Activated T-helper 2 cell treated with anti-CD3 and anti-CD28 coated beads, Interferon-gamma antibody, Interleukin-2, Interleukin-4, amounts not matched to agents 10 μg/mL and 5 μg/mL and 100 μg/mL, durations not matched to agents 14 hours and 24 hours and 36 hours (primary cell): ENCODE measurements at regions of chr16 and their contacts with region 1.

Region 1: GRCh38 chr16:82229796-82230619 is 60.0 kb upstream of the MPHOSPH6 start:
- DNase-seq: peak; percentile 27
- H3K4me3 Mint-ChIP-seq: no peak overlapping the region
- H3K27ac Mint-ChIP-seq: no peak overlapping the region
- H3K4me1 Mint-ChIP-seq: no peaks in the 10 kb centered on the region
- H3K27me3 Mint-ChIP-seq: peaks cover 26% of the 10 kb centered on the region

Region 2: DNA sequence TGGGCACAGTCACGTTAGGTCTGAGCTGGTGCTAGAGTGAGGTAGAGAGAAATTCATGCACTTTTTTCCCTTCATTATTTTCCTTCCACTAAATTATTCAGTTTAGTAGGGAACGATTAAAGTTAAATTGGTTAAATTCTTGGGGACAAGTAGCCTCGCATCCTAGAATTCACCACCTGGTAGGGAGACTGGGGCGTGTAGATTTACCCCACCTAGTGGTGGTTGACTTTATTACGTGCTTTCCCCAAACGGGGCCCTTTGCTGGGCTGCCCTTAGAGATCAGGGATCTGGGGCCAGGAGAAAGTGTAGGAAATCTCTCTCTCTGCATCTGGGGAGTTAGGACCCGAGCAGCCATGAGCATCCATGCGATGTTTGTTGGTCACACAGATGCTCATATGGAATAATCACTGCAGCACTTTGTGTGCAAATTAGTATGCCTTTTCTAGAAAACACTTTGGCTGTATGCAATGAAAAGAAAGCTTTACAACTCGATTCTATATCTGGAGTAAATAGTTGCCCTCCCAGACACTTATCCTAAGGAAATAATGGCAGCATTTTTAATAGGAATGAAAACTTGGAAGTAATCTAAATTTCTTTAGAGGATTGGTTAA is 343.9 kb before region 1 on chr16:
- intact Hi-C with region 1: loop called (anchors 1 kb)
- DNase-seq: no peak
- H3K4me3 Mint-ChIP-seq: no peak overlapping the region
- H3K27ac Mint-ChIP-seq: no peak overlapping the region
- H3K4me1 Mint-ChIP-seq: peaks cover 1% of the 10 kb centered on the region
- H3K27me3 Mint-ChIP-seq: no peaks in the 10 kb centered on the region

Region 3: GRCh38 chr16:81940781-81941560 is 289.0 kb before region 1 on chr16:
- intact Hi-C with region 1: loop called (anchors 1 kb)
- DNase-seq: no peak
- H3K4me3 Mint-ChIP-seq: no peak overlapping the region
- H3K27ac Mint-ChIP-seq: no peak overlapping the region
- H3K4me1 Mint-ChIP-seq: no peaks in the 10 kb centered on the region
- H3K27me3 Mint-ChIP-seq: no peaks in the 10 kb centered on the region

Region 4: DNA sequence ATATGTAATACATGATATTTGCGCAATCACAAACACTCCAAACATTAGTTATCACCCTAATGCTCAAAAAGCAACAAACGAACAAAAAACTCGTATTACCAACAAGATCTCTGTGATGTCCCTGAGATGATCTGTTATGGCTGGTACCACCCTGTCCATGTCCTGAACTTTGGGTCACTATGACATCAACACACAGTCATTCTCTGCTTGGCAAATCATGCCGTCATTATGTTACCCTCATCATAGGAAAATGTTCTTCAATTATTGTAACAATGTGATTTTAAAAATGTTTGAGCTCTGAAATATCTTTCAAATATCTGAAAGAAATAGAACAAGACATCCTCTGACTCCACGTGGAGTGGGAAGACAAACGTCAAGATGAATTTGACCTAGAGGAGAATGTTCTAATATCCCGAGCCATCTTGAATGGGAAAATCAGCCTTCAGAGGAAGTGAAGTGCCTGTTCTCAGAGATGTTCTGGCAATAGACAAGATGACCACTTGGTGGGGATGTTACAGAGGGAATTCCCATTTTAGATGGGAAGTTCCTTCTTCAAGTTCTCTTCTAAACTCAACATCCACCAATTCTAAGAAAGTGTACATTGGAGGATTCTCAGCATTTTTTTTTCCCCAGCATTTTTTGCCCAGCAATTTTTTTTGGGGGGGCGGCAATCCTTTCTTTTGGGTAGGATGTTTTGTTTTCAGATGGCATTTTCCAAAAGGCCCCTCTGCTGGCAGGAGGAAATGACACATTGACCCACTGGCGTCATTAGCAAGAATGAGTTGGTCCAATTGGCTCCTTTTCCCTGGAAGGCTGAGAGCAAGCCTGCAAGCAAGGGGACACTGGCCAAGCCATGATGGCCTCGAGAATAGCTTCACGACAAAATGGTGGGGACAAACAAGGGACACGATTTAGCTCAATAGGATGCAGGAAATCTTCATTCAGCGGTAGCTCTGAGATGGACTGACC is 198.6 kb before region 1 on chr16:
- intact Hi-C with region 1: loop called (anchors 5 kb)
- DNase-seq: no peak
- H3K4me3 Mint-ChIP-seq: no peak overlapping the region
- H3K27ac Mint-ChIP-seq: no peak overlapping the region
- H3K4me1 Mint-ChIP-seq: no peaks in the 10 kb centered on the region
- H3K27me3 Mint-ChIP-seq: peaks cover 13% of the 10 kb centered on the region

Region 5: DNA sequence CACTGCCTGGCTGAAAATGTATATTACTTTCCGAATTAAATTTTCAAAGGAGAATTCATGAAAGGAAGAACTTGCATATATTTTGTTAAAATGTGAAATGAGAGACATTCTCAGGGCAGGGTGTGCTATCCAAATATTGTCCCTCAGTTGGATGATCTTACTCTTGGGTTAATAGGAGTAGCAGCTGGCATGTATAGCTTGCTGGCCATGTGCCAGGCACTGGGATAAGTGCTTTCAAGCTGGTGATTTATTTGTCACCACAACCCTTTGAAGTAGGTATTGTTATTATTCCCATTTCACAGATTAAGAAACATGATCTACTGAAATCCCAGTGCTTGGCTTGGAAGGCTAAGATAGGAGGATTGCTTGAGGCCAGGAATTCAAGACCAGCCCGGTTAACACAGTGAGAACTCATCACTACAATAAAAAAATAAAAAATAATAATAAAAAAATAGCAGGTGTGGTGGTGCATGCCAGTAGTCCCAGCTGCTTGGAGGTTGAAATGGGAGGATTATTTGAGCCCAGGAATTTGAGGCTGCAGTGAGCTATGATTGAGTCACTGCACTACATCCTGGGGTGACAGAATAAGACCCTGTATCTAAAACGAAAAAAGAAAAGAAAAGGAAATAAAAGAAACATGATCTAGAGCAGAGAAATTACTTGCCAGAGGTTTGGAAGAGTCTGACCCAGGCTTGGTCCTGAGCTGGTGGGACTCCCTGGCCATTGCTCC is 48.4 kb before region 1 on chr16:
- intact Hi-C with region 1: no loop called
- DNase-seq: no peak
- H3K4me3 Mint-ChIP-seq: no peak overlapping the region
- H3K27ac Mint-ChIP-seq: no peak overlapping the region
- H3K4me1 Mint-ChIP-seq: no peaks in the 10 kb centered on the region
- H3K27me3 Mint-ChIP-seq: peaks cover 44% of the 10 kb centered on the region

Region 6: DNA sequence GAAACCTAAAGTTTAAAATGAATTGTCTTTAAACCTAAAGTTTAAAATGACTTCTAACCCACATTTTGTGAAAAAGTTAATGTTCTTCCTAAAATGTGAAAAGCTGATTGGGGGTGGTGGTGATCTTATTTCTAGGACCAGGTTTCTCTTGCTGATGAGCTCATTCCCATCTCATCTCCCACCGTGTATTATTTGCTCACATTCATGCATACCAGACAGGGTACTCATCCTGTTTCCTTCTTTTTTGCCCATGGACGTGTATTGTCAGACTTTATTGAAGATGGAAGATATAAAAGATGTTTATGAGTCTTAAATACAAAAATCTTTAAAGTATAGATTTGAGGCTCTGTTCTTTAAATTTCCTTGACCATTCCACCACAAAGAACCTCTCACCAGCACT is 10.1 kb after region 1 on chr16:
- intact Hi-C with region 1: no loop called
- DNase-seq: no peak
- H3K4me3 Mint-ChIP-seq: no peak overlapping the region
- H3K27ac Mint-ChIP-seq: no peak overlapping the region
- H3K4me1 Mint-ChIP-seq: peaks cover 8% of the 10 kb centered on the region
- H3K27me3 Mint-ChIP-seq: peaks cover 23% of the 10 kb centered on the region